ENCODE measurements at regions of chr1 and their contacts with region 1.

Region 1: DNA sequence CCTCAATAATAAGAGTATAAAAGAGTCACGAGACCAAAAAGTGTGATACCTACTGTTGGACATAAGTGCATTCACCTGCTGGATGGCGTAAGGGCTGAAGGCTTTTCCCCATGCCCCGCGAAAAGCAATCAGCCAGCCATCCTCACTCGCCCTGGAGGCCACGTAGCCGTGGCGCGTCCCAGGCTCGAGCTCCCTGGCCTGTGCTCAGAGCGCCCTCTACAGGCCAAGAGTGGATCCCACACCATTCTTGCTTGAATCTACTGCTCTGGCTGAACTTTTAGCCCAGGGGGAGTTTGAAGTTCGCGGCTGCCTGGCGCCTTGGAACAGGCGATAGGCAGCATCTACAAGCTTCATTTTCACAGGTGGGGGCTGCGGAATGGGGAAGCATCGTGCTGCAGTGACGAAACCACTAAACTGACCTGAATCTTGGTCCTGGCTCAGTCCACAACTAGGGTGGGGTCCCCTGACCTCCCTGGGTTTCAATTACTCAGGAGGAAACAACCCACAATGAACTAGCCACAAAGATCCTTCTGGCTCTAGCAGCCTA is 70.3 kb upstream of the SERBP1 start:
- DNase-seq: peak; percentile 84
- H3K4me3 Mint-ChIP-seq: no peak overlapping the region
- H3K27ac Mint-ChIP-seq: no peak overlapping the region
- H3K4me1 Mint-ChIP-seq: peaks cover 9% of the 10 kb centered on the region
- H3K27me3 Mint-ChIP-seq: peaks cover 9% of the 10 kb centered on the region

Region 2: DNA sequence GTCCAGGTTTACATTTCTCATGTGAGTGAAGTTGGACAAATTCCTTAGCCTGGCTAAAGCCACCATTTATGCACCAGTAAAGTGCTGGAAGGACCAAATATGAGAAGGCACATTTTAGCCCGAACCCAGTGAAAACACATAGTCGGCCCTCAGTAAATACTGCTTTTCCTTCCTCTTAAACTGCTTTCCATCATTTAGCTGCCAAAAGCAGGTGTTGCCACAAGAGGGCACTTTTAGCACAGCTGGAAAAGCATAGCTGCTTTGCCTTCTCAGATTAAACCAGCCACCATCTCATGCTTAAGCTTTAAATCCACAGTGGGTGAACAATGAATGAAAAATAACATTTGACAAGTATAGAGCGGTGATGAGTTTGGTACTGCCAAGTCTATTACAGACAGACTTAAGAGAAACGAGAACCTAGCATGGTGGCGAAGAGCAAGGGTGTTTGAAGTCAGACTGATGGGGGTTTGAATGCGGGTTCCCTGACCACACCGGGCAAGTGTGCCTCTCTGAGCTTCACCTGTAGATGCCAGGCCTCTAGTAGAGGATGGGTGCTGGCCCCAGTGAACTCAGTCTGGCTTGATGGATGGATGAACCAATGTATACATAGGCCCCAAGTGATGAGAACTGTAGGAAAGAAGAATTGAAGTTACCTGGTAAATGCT is 504.3 kb before region 1 on chr1:
- intact Hi-C with region 1: loop called (anchors 1 kb)
- DNase-seq: peak; percentile 56
- H3K4me3 Mint-ChIP-seq: no peak overlapping the region
- H3K27ac Mint-ChIP-seq: peak overlapping the region; percentile 45
- H3K4me1 Mint-ChIP-seq: peaks cover 22% of the 10 kb centered on the region
- H3K27me3 Mint-ChIP-seq: no peaks in the 10 kb centered on the region

Region 3: GRCh38 chr1:67230539-67230938 is 269.9 kb before region 1 on chr1:
- intact Hi-C with region 1: loop called (anchors 1 kb)
- DNase-seq: no peak
- H3K4me3 Mint-ChIP-seq: no peak overlapping the region
- H3K27ac Mint-ChIP-seq: no peak overlapping the region
- H3K4me1 Mint-ChIP-seq: peaks cover 35% of the 10 kb centered on the region
- H3K27me3 Mint-ChIP-seq: no peaks in the 10 kb centered on the region

Region 4: DNA sequence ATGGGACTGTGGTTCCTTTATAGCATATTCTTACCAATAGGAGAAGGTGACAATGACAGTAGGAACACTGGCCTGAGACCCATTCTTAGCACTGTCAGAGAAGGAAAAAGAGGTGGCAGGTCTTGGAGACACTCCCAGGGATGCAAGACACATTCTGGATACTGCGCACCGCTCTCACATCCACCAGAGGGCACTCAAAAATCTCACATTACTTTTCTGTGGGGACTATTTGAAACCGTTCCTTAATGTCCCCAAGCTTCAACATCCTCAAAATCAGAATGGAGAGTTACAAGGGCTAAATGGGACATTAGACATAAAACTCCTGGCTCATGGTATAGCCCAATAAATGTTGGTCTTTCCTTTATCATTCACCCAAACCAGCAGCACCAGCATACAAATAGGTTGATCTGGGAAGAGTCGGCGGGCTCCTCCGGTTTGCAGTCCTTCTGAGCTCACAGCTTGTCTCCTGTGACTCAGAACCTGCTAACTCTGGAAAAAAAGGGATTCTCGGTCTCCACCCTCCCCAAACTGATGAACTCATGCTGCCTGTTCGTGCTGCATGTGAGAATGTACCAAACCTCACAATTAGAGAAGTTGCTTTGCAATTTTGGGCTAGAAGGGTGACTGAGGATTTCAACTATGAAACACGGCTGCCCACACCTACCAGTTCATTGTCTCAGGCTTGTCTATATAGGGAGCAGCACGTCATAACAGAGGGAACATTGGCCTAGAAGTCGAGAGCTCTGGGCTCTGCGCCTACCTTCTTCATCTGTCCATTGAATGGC is 152.6 kb before region 1 on chr1:
- intact Hi-C with region 1: loop called (anchors 2 kb)
- DNase-seq: no peak
- H3K4me3 Mint-ChIP-seq: no peak overlapping the region
- H3K27ac Mint-ChIP-seq: peak overlapping the region; percentile 51
- H3K4me1 Mint-ChIP-seq: peaks cover 62% of the 10 kb centered on the region
- H3K27me3 Mint-ChIP-seq: no peaks in the 10 kb centered on the region

Region 5: GRCh38 chr1:67404212-67404620 is 96.3 kb before region 1 on chr1:
- intact Hi-C with region 1: no loop called
- DNase-seq: no peak
- H3K4me3 Mint-ChIP-seq: no peak overlapping the region
- H3K27ac Mint-ChIP-seq: no peak overlapping the region
- H3K4me1 Mint-ChIP-seq: peaks cover 24% of the 10 kb centered on the region
- H3K27me3 Mint-ChIP-seq: no peaks in the 10 kb centered on the region

Region 6: DNA sequence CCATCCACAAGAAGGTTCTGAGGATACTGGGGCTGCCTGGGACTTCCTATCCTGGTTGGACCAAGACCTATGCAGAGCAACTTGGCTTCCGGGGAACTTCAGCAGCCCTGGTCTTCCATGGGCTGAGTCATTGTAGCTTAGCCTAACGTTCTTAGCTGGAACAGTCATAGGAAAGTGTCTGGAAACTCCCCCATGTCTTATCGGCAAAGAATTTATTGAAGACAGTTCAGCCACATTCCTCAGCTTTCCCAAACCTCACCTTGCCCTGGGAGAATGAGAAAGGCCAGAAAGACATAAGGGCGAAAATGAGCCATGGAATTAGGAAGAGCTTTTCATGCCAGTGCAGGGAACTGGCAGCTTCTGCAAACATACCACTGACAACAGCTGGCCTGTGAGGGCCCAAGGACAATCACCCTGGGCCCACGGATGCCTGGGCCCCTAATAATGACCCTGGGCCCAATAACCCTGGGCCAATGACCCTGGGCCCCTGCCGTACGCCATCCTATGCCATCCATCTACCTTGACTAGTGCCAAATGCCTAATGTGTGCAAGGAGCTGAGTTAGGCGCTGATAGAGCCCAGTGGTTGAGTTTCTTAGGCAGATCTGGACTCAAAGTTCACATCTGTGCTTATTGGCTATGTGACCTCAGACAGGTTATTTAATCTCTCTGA is 70.1 kb after region 1 on chr1:
- intact Hi-C with region 1: no loop called
- DNase-seq: no peak
- H3K4me3 Mint-ChIP-seq: no peak overlapping the region
- H3K27ac Mint-ChIP-seq: no peak overlapping the region
- H3K4me1 Mint-ChIP-seq: no peaks in the 10 kb centered on the region
- H3K27me3 Mint-ChIP-seq: peaks cover 22% of the 10 kb centered on the region